CD8-positive, alpha-beta T cell (primary cell): ENCODE measurements at regions of chr1 and their contacts with region 1.

Region 1: DNA sequence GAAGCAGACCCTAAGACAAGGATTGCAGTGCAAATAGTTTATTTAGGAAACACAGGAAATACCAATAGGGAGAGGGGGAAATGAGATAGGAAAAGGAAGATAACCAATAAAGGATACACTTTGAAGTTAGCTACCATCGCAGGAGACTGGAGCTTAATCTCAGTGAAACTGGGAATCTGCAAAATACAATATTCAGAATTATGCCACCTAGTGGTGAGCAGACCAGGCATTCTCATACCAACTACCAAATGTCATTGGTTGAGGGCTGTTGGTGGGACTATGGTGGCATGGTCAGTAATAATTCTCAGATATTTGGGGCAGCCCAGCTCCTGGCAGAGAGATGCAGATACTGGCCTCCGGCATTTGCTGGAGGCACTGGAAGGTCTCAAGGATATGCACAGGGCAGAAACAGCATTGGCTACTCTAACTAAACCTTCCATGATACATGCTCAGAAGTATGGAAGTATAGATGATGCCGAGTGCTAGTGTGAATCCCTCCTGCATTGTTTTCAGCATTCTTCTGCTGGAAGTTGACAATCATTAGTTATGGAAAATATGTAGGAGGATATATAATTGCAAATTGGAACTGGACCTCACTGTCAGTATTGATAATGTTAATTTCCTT is 11.8 kb upstream of the ZFP69B start:
- DNase-seq: peak in 4 of 9 experiments; percentile 17 to 63 (median 40)
- ATAC-seq: peak; percentile 40
- H3K4me3 ChIP-seq: no peak overlapping the region
- H3K4me3 Mint-ChIP-seq: no peak overlapping the region
- H3K27ac ChIP-seq: no peak overlapping the region
- H3K27ac Mint-ChIP-seq: no peak overlapping the region
- H3K4me1 ChIP-seq: no peaks in the 10 kb centered on the region
- H3K4me1 Mint-ChIP-seq: peaks cover 2% of the 10 kb centered on the region
- H3K27me3 ChIP-seq: no peaks in the 10 kb centered on the region
- H3K27me3 Mint-ChIP-seq: no peaks in the 10 kb centered on the region
- CTCF ChIP-seq: peak; percentile 70

Region 2: GRCh38 chr1:40143891-40144575 is 294.5 kb before region 1 on chr1:
- CTCF ChIA-PET with region 1: interaction called, 35 read pairs
- POLR2A ChIA-PET with region 1: no interaction called
- intact Hi-C with region 1: loop called (anchors 1 to 2 kb)
- DNase-seq: peak; percentile 10 to 82 (median 51)
- ATAC-seq: peak; percentile 74
- H3K4me3 ChIP-seq: no peak overlapping the region
- H3K4me3 Mint-ChIP-seq: no peak overlapping the region
- H3K27ac ChIP-seq: no peak overlapping the region
- H3K27ac Mint-ChIP-seq: no peak overlapping the region
- H3K4me1 ChIP-seq: peaks cover 3% of the 10 kb centered on the region
- H3K4me1 Mint-ChIP-seq: peaks cover 6% of the 10 kb centered on the region
- H3K27me3 ChIP-seq: no peaks in the 10 kb centered on the region
- H3K27me3 Mint-ChIP-seq: peaks cover 20% of the 10 kb centered on the region
- CTCF ChIP-seq: peak; percentile 73

Region 3: GRCh38 chr1:40423264-40423642 is 15.2 kb before region 1 on chr1:
- CTCF ChIA-PET with region 1: interaction called, 37 read pairs
- POLR2A ChIA-PET with region 1: interaction called, 3 read pairs
- intact Hi-C with region 1: no loop called
- DNase-seq: no peak
- ATAC-seq: no peak
- H3K4me3 ChIP-seq: no peak overlapping the region
- H3K4me3 Mint-ChIP-seq: no peak overlapping the region
- H3K27ac ChIP-seq: no peak overlapping the region
- H3K27ac Mint-ChIP-seq: no peak overlapping the region
- H3K4me1 ChIP-seq: no peaks in the 10 kb centered on the region
- H3K4me1 Mint-ChIP-seq: peaks cover 7% of the 10 kb centered on the region
- H3K27me3 ChIP-seq: no peaks in the 10 kb centered on the region
- H3K27me3 Mint-ChIP-seq: no peaks in the 10 kb centered on the region
- CTCF ChIP-seq: no peak

Region 4: GRCh38 chr1:40519517-40519916 is 81.0 kb after region 1 on chr1:
- CTCF ChIA-PET with region 1: no interaction called
- POLR2A ChIA-PET with region 1: no interaction called
- intact Hi-C with region 1: no loop called
- DNase-seq: no peak
- ATAC-seq: no peak
- H3K4me3 ChIP-seq: no peak overlapping the region
- H3K4me3 Mint-ChIP-seq: no peak overlapping the region
- H3K27ac ChIP-seq: no peak overlapping the region
- H3K27ac Mint-ChIP-seq: no peak overlapping the region
- H3K4me1 ChIP-seq: no peaks in the 10 kb centered on the region
- H3K4me1 Mint-ChIP-seq: no peaks in the 10 kb centered on the region
- H3K27me3 ChIP-seq: peaks cover 0 to 2% of the 10 kb centered on the region in 2 experiments
- H3K27me3 Mint-ChIP-seq: no peaks in the 10 kb centered on the region
- CTCF ChIP-seq: no peak